ENCODE measurements at regions of chr9 and their contacts with region 1.

Region 1: GRCh38 chr9:77011973-77012821 is 7.3 kb upstream of the FOXB2 start:
- DNase-seq: peak; percentile 90
- H3K4me3 Mint-ChIP-seq: peak overlapping the region; percentile 10
- H3K27ac Mint-ChIP-seq: no peak overlapping the region
- H3K4me1 Mint-ChIP-seq: peaks cover 4% of the 10 kb centered on the region
- H3K27me3 Mint-ChIP-seq: peaks cover 72% of the 10 kb centered on the region

Region 2: GRCh38 chr9:76651119-76651705 is 361.0 kb before region 1 on chr9:
- intact Hi-C with region 1: no loop called
- DNase-seq: no peak
- H3K4me3 Mint-ChIP-seq: peak overlapping the region; percentile 65
- H3K27ac Mint-ChIP-seq: no peak overlapping the region
- H3K4me1 Mint-ChIP-seq: peaks cover 36% of the 10 kb centered on the region
- H3K27me3 Mint-ChIP-seq: peaks cover 2% of the 10 kb centered on the region

Region 3: GRCh38 chr9:76810377-76810957 is 201.7 kb before region 1 on chr9:
- intact Hi-C with region 1: loop called (anchors 1 kb)
- DNase-seq: peak; percentile 65
- H3K4me3 Mint-ChIP-seq: no peak overlapping the region
- H3K27ac Mint-ChIP-seq: no peak overlapping the region
- H3K4me1 Mint-ChIP-seq: no peaks in the 10 kb centered on the region
- H3K27me3 Mint-ChIP-seq: peaks cover 7% of the 10 kb centered on the region

Region 4: GRCh38 chr9:76905791-76906650 is 106.2 kb before region 1 on chr9 and contains the start of gene PRUNE2:
- intact Hi-C with region 1: loop called (anchors 10 kb)
- DNase-seq: peak; percentile 67
- H3K4me3 Mint-ChIP-seq: no peak within 1 kb of the TSS
- H3K27ac Mint-ChIP-seq: no peak within 1 kb of the TSS
- H3K4me1 Mint-ChIP-seq: peaks cover 1% of the 10 kb centered on the region
- H3K27me3 Mint-ChIP-seq: peaks cover 44% of the 10 kb centered on the region
- total RNA-seq, gene PRUNE2: 0.40 and 0.50 TPM in 2 replicates

Region 5: GRCh38 chr9:77022783-77023440 is 10.7 kb after region 1 on chr9:
- intact Hi-C with region 1: loop called (anchors 1 kb)
- DNase-seq: no peak
- H3K4me3 Mint-ChIP-seq: peak overlapping the region; percentile 12
- H3K27ac Mint-ChIP-seq: peak overlapping the region; percentile 60
- H3K4me1 Mint-ChIP-seq: peaks cover 9% of the 10 kb centered on the region
- H3K27me3 Mint-ChIP-seq: peaks cover 64% of the 10 kb centered on the region